ENCODE measurements at regions of chr5 and their contacts with region 1.

Region 1: DNA sequence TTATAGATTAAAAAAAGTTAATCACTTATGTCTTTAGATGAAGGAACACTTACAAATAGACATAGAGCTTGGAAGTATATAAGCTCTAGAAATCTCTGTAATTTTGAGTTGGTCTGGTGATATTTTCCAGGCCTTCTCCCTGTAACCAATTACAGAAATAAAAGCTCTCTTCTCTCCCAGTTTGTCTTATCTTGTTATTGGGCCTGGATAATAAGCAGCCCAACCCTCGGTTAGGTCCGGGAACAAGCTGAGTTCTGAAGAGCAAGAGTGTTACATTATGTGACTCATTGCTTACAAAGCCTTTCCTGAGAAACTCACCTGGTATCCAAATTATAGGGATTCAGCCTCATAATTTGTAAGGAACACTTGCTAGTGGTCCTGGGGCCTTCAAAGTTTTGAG is 1146.2 kb downstream of the CDH9 start:
- DNase-seq: no peak
- H3K4me3 ChIP-seq: no peak overlapping the region
- H3K27ac ChIP-seq: no peak overlapping the region
- H3K4me1 ChIP-seq: no peaks in the 10 kb centered on the region
- CTCF ChIP-seq: no peak

Region 2: DNA sequence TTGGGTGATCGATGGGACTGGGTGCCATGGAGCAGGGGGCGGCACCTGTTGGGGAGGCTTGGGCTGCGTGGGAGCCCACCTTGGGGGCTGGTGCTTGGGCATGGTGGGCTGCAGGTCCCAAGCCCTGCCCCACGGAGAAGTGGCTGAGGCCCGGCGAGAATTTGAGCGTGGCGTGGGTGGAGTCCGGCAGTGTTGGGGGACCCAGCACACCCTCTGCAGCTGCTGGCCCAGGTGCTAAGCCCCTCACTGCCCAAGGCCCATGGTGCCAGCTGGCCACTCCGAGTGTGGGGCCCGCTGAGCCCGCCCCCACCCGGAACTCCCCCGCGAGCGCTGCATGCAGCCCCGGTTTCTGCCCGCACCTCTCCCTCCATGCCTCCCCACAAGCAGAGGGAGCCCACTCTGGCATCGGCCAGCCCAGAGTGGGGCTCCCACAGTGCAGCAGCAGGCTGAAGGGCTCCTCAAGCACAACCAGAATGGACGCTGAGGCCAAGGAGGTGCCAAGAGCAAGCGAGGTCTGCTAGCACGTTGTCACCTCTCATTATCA is 68.8 kb before region 1 on chr5:
- CTCF ChIA-PET with region 1: no interaction called
- POLR2A ChIA-PET with region 1: no interaction called
- intact Hi-C with region 1: loop called (anchors 2 kb)
- DNase-seq: no peak
- H3K4me3 ChIP-seq: no peak overlapping the region
- H3K27ac ChIP-seq: no peak overlapping the region
- H3K4me1 ChIP-seq: no peaks in the 10 kb centered on the region
- CTCF ChIP-seq: no peak

Region 3: DNA sequence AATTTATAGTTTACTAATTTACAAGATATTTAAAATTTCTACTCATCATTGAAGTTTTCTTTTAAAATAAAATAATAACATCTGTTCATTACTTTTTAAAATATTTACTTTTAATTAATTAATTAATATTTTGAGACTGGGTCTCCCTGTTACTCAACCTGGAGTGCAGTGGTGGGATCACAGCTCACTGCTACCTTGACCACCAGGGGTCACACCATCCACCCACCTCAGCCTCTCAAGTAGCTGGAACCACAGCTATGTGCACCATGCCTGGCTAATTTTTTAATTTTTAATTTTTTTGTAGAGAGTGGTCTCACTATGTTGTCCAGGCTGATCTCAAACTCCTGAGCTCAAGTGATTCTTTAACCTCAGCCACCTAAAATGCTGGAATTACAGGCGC is 132.6 kb after region 1 on chr5:
- CTCF ChIA-PET with region 1: no interaction called
- POLR2A ChIA-PET with region 1: no interaction called
- intact Hi-C with region 1: no loop called
- DNase-seq: no peak
- H3K4me3 ChIP-seq: no peak overlapping the region
- H3K27ac ChIP-seq: no peak overlapping the region
- H3K4me1 ChIP-seq: no peaks in the 10 kb centered on the region
- CTCF ChIP-seq: no peak